Activated CD4-positive, alpha-beta memory T cell treated with anti-CD3 and anti-CD28 coated beads for 36 hours (primary cell): ENCODE measurements at regions of chr1 and their contacts with region 1.

Region 1: GRCh38 chr1:193741228-193741627 is 554.8 kb upstream of the B3GALT2 start:
- DNase-seq: no peak
- H3K4me3 Mint-ChIP-seq: no peak overlapping the region
- H3K27ac Mint-ChIP-seq: no peak overlapping the region
- H3K4me1 Mint-ChIP-seq: no peaks in the 10 kb centered on the region
- H3K27me3 Mint-ChIP-seq: no peaks in the 10 kb centered on the region

Region 2: DNA sequence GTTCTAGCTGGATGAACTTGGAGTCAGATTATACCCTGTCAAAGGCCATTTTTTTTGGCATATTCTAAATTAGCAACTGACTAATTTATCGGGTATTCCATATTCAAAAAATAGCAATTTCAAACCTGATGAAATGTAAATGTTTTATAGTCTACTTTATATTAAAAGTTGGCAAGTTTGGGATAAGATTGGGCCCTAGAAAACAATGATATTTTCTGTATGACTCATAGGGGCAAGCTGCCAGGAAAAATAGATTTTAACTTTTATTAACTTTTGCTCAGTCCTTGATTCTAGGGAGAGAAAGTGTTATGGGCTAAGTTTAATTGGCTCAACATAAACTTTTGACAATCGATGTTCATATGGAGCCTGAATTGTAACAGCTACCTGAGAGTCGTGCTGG is 22.0 kb after region 1 on chr1:
- CTCF ChIA-PET with region 1: no interaction called
- POLR2A ChIA-PET with region 1: no interaction called
- intact Hi-C with region 1: loop called (anchors 1 kb)
- DNase-seq: no peak
- H3K4me3 Mint-ChIP-seq: no peak overlapping the region
- H3K27ac Mint-ChIP-seq: no peak overlapping the region
- H3K4me1 Mint-ChIP-seq: no peaks in the 10 kb centered on the region
- H3K27me3 Mint-ChIP-seq: no peaks in the 10 kb centered on the region

Region 3: GRCh38 chr1:193905288-193906072 is 164.3 kb after region 1 on chr1:
- CTCF ChIA-PET with region 1: no interaction called
- POLR2A ChIA-PET with region 1: no interaction called
- intact Hi-C with region 1: no loop called
- DNase-seq: no peak
- H3K4me3 Mint-ChIP-seq: no peak overlapping the region
- H3K27ac Mint-ChIP-seq: no peak overlapping the region
- H3K4me1 Mint-ChIP-seq: no peaks in the 10 kb centered on the region
- H3K27me3 Mint-ChIP-seq: no peaks in the 10 kb centered on the region